ENCODE measurements at regions of chr1 and their contacts with region 1.

Region 1: DNA sequence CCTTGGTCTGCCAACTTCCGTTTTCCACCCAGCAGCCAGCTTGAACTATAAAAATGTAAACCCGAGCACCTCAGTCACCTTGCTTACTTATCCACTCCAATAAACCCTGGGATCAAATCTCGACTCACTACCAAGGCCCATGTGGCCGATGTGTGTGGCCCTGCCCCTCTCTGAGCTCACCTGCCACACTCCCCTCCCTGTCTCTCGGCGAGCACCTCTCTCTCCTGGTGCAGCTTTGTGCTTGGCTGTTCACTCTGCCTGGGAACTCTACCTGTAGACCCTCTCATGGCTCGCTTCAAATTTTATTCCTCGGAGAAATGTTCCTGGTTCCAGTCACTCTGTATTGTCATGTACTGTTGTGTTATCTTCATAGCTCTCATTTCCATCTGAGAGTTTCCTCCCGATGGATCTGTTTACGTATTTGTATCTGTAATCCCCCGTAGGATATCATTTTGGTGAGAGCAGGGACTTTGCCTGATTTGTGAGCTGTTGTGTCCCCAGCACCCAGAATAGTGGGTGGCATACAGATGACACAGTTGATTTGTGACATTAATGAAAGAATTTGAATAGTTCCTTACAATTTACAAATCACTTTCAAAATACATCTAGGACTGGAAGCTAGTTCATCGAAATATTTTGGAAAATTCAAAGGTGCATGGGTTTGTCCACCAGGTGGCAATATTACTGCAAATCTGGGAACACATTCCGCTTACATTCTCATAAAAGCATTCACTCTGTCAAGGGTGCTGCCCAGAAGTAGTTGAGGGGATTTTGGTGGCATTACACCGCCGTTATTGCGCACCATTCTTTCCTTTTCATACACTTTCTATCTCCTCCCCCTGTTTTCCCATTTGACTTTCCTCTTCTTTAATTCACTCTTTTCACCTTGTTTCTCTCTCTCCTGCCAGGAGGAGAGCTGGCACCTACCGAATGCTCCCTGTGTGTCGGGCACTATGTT is 95.3 kb downstream of the ABCA4 start:
- DNase-seq: peak; percentile 64
- H3K4me3 ChIP-seq: no peak overlapping the region
- CTCF ChIP-seq: peak; percentile 65

Region 2: GRCh38 chr1:93519196-93519827 is 506.4 kb before region 1 on chr1:
- in situ Hi-C with region 1: no loop called
- DNase-seq: no peak
- H3K4me3 ChIP-seq: no peak overlapping the region
- CTCF ChIP-seq: no peak

Region 3: GRCh38 chr1:93865253-93865652 is 160.4 kb before region 1 on chr1:
- in situ Hi-C with region 1: no loop called
- DNase-seq: no peak
- H3K4me3 ChIP-seq: no peak overlapping the region
- CTCF ChIP-seq: no peak

Region 4: DNA sequence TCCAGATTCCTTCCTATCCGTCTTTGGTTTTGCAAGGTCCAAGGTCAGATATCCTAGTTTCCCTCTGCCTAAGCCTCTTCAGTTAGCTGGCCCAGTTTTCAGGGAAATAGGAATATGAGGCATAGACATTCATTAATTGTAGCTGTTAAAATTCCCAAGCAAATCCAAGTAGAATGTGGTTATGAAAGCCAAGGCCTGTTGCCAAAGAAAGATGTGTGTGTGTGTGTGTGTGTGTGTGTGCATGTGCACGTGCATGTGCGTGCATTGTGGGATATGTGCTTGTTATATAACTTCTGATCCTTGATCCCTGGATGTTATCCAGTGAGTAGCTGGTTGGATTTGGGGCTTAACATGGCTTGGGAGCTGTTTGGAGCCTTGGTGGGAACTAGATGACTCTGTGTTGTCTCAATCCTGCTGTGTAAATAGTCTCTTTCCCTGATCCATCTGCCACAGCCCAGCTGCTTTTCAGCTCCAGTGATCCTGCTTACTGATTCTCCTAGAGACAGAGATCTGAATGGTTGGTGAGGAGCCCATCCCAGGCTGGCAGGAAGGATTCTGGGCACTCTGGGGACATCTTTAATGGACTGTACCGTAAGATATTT is 45.8 kb before region 1 on chr1:
- in situ Hi-C with region 1: loop called (anchors 5 kb)
- DNase-seq: no peak
- H3K4me3 ChIP-seq: no peak overlapping the region
- CTCF ChIP-seq: no peak

Region 5: DNA sequence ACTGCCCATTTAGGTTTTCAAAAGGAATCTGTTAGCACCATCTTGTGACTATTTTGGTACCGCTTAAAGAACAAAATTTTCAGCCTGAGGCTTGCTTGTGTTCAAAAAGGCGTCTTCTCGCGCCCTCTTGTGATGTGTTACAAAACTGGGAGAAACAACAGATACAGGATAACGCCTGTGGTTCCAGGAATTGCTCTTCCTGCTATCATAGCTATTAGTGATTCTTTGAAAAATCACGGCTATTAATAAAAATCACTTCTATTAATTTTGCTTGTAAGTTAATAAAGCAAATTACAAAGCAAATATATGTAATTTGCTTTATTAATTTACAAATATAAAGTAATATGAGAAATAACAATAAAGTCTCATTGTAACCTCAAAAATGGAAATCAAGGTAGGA is 310.3 kb after region 1 on chr1:
- in situ Hi-C with region 1: loop called (anchors 5 kb)
- DNase-seq: peak; percentile 94
- H3K4me3 ChIP-seq: no peak overlapping the region
- CTCF ChIP-seq: peak; percentile 86

Measured in astrocyte of the cerebellum (primary cell).